Left ventricle myocardium inferior (tissue), 1 donor: ENCODE measurements at regions of chr11 and their contacts with region 1.

Region 1: DNA sequence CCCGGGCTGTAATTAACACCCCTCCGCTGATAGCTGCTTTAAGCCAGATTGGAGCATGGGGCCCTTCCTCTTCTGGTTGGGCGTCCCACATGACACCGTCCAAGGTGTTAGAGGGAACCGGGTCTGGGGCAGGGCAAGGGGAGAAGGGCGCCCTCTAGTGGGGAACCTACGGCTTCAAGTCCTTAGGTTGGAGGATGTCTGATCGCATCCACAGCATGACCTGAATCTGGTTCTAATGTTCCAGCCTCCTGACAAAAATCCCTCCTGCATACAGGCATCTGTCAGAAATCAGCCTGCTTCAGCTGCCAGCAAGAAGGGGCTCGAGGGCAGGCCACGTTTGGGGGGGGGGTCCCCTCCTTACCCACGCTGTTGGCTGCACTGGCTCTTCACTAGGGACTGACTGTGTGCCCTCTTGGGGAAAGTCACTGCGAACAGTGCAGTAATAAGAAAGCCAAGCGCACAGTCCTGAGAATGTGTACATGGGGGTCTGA is 94.2 kb upstream of the TBCEL start:
- DNase-seq: peak; percentile 23
- H3K4me3 ChIP-seq: no peak overlapping the region
- H3K27ac ChIP-seq: no peak overlapping the region
- H3K4me1 ChIP-seq: no peaks in the 10 kb centered on the region
- H3K27me3 ChIP-seq: peaks cover 32% of the 10 kb centered on the region
- CTCF ChIP-seq: peak; percentile 56

Region 2: DNA sequence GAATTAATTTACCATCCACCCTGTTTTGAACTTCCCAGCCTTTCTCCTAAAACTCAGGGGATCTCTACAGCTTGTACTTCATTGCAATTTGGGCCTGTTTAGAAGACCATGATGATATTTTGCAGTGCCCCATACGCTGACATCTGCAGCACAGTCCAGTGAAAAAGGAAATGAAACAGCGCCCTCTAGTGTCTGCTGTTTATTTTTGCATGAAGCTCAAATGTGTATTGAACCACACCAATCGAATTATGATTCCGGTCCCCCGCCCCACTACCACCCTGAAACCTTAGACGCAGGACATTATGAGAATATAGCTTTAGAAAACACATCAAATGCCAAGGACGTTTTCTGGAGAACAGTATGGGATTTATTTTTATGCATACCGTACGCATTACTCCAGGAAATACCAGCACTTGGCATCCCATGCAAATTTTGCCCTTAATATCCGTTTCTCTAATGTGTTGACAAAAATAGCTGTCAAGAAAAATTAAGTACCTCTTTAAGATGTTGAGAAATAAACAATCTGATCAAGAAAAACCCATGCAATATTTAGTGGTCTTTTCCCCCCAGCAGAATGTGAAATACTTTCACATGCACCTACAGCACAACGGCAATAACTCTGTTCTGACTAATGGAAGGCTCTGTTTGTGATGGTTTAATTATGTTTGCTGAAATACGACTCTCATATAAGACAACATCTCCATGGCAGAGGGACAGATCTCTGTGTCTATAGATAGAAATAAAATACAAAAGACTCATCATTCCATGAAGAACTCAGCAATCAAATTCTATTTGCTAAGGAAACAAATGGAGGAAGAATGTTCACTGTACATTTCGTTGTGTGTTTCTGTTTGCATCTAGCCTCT is 265.3 kb after region 1 on chr11:
- intact Hi-C with region 1: loop called (anchors 10 kb)
- DNase-seq: no peak
- H3K4me3 ChIP-seq: no peak overlapping the region
- H3K27ac ChIP-seq: no peak overlapping the region
- H3K4me1 ChIP-seq: peaks cover 17% of the 10 kb centered on the region
- H3K27me3 ChIP-seq: peaks cover 42% of the 10 kb centered on the region
- CTCF ChIP-seq: peak; percentile 85